ENCODE measurements at regions of chr10 and their contacts with region 1.

Region 1: GRCh38 chr10:24383681-24384106 is 174.8 kb downstream of the KIAA1217 start:
- DNase-seq: peak; percentile 83 to 91
- H3K4me3 ChIP-seq: no peak overlapping the region; the same call in 1 of the 2 replicates
- H3K27ac ChIP-seq: peak overlapping the region; percentile 65; the same call in 1 of the 2 replicates
- H3K4me1 ChIP-seq: peaks cover 8% of the 10 kb centered on the region; the same call in 1 of the 2 replicates
- H3K27me3 ChIP-seq: no peaks in the 10 kb centered on the region
- CTCF ChIP-seq: peak; percentile 63

Region 2: GRCh38 chr10:24209946-24210491 is 173.7 kb before region 1 on chr10:
- CTCF ChIA-PET with region 1: no interaction called
- POLR2A ChIA-PET with region 1: no interaction called
- intact Hi-C with region 1: loop called (anchors 2 kb)
- DNase-seq: peak in 1 of 2 experiments; percentile 53
- H3K4me3 ChIP-seq: peak overlapping the region; percentile 47; the same call in 1 of the 2 replicates
- H3K27ac ChIP-seq: 0 out of 2 replicates have a peak overlapping the region, but pooled peaks have one; percentile 77
- H3K4me1 ChIP-seq: peaks cover 38% of the 10 kb centered on the region
- H3K27me3 ChIP-seq: no peaks in the 10 kb centered on the region
- CTCF ChIP-seq: no peak

Region 3: DNA sequence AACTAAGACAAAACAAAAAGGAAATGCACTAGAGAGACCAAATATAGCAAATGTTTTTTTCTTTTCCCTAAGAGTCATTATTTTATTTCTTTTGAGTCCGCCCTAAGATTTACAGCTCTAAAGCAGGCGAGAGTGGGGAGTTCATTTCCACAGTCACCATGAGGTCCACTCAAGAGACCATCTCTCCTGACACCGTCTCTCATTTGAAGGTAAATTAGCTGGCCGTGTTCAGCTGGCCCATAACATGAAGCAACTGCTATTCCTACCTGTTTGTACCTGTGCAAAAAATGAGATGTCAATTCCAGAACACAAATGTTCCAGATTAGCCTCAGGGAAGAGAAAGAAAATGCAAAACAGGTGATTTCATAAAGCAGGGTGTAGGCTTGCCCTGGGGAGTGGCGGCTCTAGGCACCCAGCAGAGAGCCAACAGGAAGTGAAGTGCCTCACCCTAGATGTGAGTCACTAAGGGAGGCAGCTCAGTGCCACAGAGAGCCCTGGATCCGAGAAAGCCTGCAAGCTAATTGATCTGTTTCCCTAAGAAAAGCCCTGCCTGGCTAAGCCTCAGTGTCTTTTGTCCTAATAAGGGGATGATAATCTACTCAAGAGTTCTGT is 99.9 kb after region 1 on chr10:
- CTCF ChIA-PET with region 1: no interaction called
- POLR2A ChIA-PET with region 1: no interaction called
- intact Hi-C with region 1: no loop called
- DNase-seq: peak; percentile 85 to 94
- H3K4me3 ChIP-seq: no peak overlapping the region
- H3K27ac ChIP-seq: peak overlapping the region; percentile 58
- H3K4me1 ChIP-seq: peaks cover 31% of the 10 kb centered on the region
- H3K27me3 ChIP-seq: no peaks in the 10 kb centered on the region
- CTCF ChIP-seq: no peak

Region 4: GRCh38 chr10:24503461-24504320 is 120.0 kb after region 1 on chr10:
- CTCF ChIA-PET with region 1: no interaction called
- POLR2A ChIA-PET with region 1: no interaction called
- intact Hi-C with region 1: loop called (anchors 1 kb)
- DNase-seq: peak in 1 of 2 experiments; percentile 40
- H3K4me3 ChIP-seq: no peak overlapping the region
- H3K27ac ChIP-seq: no peak overlapping the region
- H3K4me1 ChIP-seq: no peaks in the 10 kb centered on the region
- H3K27me3 ChIP-seq: no peaks in the 10 kb centered on the region
- CTCF ChIP-seq: peak; percentile 74

Measured in PC-9 (cell line).